ENCODE measurements at regions of chr11 and their contacts with region 1.

Region 1: GRCh38 chr11:62855571-62856332 is 16.4 kb upstream of the WDR74 start:
- DNase-seq: peak; percentile 96 to 99 (median 98)
- ATAC-seq: peak; percentile 92
- H3K4me3 ChIP-seq: peak overlapping the region; percentile 79
- H3K4me3 Mint-ChIP-seq: peak overlapping the region; percentile 98
- H3K27ac ChIP-seq: peak overlapping the region; percentile 66 to 72
- H3K27ac Mint-ChIP-seq: peak overlapping the region; percentile 90
- H3K4me1 ChIP-seq: peaks cover 41% of the 10 kb centered on the region
- H3K4me1 Mint-ChIP-seq: peaks cover 63% of the 10 kb centered on the region
- H3K27me3 ChIP-seq: no peaks in the 10 kb centered on the region
- H3K27me3 Mint-ChIP-seq: no peaks in the 10 kb centered on the region
- CTCF ChIP-seq: no peak

Region 2: DNA sequence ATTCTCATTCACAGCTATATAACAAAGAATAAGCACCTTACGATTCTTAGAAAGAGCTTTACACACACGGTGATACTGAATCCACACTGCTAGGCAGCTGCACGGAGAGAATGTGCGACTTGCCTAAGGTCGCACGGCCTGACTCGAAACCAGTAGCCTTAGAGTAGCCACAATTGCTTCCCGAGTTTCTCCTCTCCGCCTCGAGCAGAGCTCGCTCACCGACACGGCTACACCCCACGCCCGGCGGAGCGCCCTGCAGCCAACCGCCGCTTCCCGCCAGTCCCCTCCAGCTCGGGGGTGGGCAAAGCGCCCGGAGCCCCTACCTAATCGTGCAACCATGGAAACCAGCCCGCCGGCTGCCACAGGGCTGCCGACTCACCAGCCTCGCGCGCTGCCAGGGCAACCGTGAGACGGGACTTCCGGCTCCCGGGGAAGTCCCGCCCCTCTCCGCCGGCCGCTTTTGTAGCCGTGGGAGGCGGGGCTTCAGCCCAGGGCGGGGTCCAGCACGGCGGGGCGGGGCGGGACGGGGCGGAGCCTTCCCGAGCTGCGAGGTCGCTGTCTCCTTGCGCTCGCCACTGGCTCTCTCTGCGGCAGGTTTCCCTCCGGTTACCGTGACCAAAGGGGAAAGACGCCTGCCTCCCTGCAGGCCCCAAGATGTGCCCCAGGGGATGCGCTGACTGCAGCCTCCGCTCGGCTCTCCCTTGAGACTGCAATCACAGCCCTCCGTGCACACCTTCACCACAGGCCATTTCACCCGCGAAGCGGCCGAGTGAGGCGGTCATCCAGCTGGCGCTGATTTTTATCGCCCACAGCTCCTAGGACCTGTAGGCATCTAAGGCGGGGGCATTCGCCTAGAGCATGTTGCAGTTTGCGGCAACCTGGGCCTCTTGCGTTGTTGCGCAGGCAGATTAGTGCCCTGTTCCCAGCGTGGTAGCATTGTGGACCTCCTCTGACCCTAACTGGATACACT is 149.6 kb before region 1 on chr11:
- CTCF ChIA-PET with region 1: no interaction called
- POLR2A ChIA-PET with region 1: interaction called, 58 read pairs
- intact Hi-C with region 1: loop called in 1 of 2 experiments (anchors 5 kb)
- DNase-seq: peak; percentile 90 to 97 (median 94)
- ATAC-seq: peak; percentile 62
- H3K4me3 ChIP-seq: peak overlapping the region; percentile 79
- H3K4me3 Mint-ChIP-seq: peak overlapping the region; percentile 86
- H3K27ac ChIP-seq: peak overlapping the region; percentile 65 to 84
- H3K27ac Mint-ChIP-seq: peak overlapping the region; percentile 92
- H3K4me1 ChIP-seq: peaks cover 49% of the 10 kb centered on the region
- H3K4me1 Mint-ChIP-seq: peaks cover 42% of the 10 kb centered on the region
- H3K27me3 ChIP-seq: no peaks in the 10 kb centered on the region
- H3K27me3 Mint-ChIP-seq: no peaks in the 10 kb centered on the region
- CTCF ChIP-seq: no peak

Region 3: DNA sequence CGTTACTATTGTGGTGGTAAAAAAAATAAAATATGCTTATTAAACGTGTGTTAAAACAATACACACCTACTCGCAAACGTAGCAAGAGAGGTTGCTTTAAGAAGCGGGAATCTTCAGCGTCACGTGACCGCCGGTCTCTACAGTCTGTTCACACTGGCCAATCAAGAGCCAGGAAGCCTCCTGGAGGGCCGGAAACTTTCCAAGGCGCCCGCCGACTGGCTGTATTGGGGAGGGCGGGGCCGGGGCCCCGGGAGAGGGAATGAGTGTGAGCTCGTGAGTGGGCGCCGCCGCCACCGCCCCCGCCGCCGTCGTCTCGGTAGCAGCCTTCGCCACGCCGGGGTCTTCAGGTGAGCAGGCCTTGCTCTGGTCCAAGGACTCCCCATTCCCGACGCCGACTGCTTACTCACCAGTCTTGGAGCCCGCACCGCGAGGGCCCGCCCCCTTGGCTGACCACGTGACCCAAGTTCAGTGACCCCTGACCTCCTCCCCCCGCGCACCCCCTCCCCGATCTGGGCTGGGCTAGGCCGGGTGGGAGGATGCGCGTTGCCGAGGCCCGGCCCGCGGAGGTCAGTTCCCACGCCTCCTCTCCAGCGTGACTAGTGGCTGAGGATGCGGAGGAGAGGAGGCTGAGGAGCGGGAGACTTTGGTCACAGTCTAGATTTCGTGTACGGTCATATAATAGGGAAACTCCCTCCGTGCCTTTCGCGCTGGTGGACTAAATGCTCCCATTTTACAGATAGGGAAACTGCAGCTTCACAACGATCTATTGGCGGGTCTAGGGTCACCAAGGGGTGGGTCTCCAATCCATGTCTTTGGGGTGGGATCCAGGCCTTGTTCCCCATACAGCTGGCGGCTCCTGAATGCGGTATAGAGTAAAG is 84.4 kb before region 1 on chr11 and contains the start of gene TAF6L:
- CTCF ChIA-PET with region 1: no interaction called
- POLR2A ChIA-PET with region 1: interaction called, 18 read pairs
- intact Hi-C with region 1: no loop called
- DNase-seq: peak; percentile 81 to 95 (median 88)
- ATAC-seq: peak; percentile 76
- H3K4me3 ChIP-seq: peak within 1 kb of the TSS; percentile 76
- H3K4me3 Mint-ChIP-seq: peak within 1 kb of the TSS; percentile 97
- H3K27ac ChIP-seq: peak within 1 kb of the TSS; percentile 79 to 88
- H3K27ac Mint-ChIP-seq: peak within 1 kb of the TSS; percentile 97
- H3K4me1 ChIP-seq: peaks cover 27% of the 10 kb centered on the region
- H3K4me1 Mint-ChIP-seq: peaks cover 24% of the 10 kb centered on the region
- H3K27me3 ChIP-seq: no peaks in the 10 kb centered on the region
- H3K27me3 Mint-ChIP-seq: no peaks in the 10 kb centered on the region
- CTCF ChIP-seq: no peak
- total RNA-seq, gene TAF6L: 11.5 to 11.8 TPM

Region 4: GRCh38 chr11:62805076-62805892 is 50.5 kb before region 1 on chr11 and contains the start of gene NXF1:
- CTCF ChIA-PET with region 1: interaction called, 7 read pairs
- POLR2A ChIA-PET with region 1: interaction called, 31 read pairs
- intact Hi-C with region 1: no loop called
- DNase-seq: peak; percentile 88 to 98 (median 96)
- ATAC-seq: peak; percentile 82
- H3K4me3 ChIP-seq: peak within 1 kb of the TSS; percentile 70
- H3K4me3 Mint-ChIP-seq: peak within 1 kb of the TSS; percentile 98
- H3K27ac ChIP-seq: peak within 1 kb of the TSS; percentile 60 to 83
- H3K27ac Mint-ChIP-seq: peak within 1 kb of the TSS; percentile 97
- H3K4me1 ChIP-seq: peaks cover 36% of the 10 kb centered on the region
- H3K4me1 Mint-ChIP-seq: peaks cover 41% of the 10 kb centered on the region
- H3K27me3 ChIP-seq: no peaks in the 10 kb centered on the region
- H3K27me3 Mint-ChIP-seq: no peaks in the 10 kb centered on the region
- CTCF ChIP-seq: no peak
- total RNA-seq, gene NXF1: 343 to 358 TPM

Region 5: GRCh38 chr11:62831520-62832335 is 24.0 kb before region 1 on chr11 and contains the start of gene STX5:
- CTCF ChIA-PET with region 1: interaction called, 4 read pairs
- POLR2A ChIA-PET with region 1: interaction called, 82 read pairs
- intact Hi-C with region 1: no loop called
- DNase-seq: peak; percentile 99 to 100 (median 99)
- ATAC-seq: peak; percentile 95
- H3K4me3 ChIP-seq: peak within 1 kb of the TSS; percentile 86
- H3K4me3 Mint-ChIP-seq: peak within 1 kb of the TSS; percentile 92
- H3K27ac ChIP-seq: peak within 1 kb of the TSS; percentile 95 to 97
- H3K27ac Mint-ChIP-seq: peak within 1 kb of the TSS; percentile 95
- H3K4me1 ChIP-seq: peaks cover 44% of the 10 kb centered on the region
- H3K4me1 Mint-ChIP-seq: peaks cover 40% of the 10 kb centered on the region
- H3K27me3 ChIP-seq: no peaks in the 10 kb centered on the region
- H3K27me3 Mint-ChIP-seq: no peaks in the 10 kb centered on the region
- CTCF ChIP-seq: no peak
- total RNA-seq, gene STX5: 93.1 to 104 TPM

Region 6: DNA sequence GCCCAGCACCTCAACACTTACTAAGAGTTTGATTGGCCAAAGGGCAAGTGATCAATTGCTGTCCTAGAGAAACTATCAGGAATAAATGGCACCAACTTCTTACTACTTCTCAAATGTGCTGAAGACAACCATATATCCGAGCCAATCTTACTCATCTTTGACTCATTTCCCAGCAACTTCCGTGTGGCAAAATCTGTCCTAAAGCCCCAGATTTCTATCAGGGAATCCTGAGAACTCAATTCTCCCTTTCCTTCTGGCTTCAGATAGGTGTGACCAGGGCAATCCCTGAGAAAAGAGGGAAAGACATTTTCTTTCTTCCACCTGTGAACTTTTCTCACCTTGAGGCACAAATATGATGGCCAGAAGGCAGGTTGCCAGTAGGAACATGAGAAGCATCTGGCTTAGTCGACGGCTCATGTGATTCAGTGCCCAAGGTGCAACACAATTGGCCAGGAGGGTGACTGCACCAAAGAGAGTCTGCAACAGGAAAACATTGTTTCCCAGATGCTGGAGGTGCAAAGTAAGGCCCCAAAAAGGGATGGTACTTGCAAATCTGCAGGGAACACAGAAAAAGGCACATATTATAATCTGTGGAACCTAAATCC is 310.1 kb after region 1 on chr11:
- CTCF ChIA-PET with region 1: no interaction called
- POLR2A ChIA-PET with region 1: no interaction called
- intact Hi-C with region 1: no loop called
- DNase-seq: no peak
- ATAC-seq: no peak
- H3K4me3 ChIP-seq: no peak overlapping the region
- H3K4me3 Mint-ChIP-seq: no peak overlapping the region
- H3K27ac ChIP-seq: no peak overlapping the region
- H3K27ac Mint-ChIP-seq: no peak overlapping the region
- H3K4me1 ChIP-seq: no peaks in the 10 kb centered on the region
- H3K4me1 Mint-ChIP-seq: no peaks in the 10 kb centered on the region
- H3K27me3 ChIP-seq: peaks cover 16 to 37% of the 10 kb centered on the region in 2 experiments
- H3K27me3 Mint-ChIP-seq: peaks cover 65% of the 10 kb centered on the region
- CTCF ChIP-seq: no peak

Region 7: DNA sequence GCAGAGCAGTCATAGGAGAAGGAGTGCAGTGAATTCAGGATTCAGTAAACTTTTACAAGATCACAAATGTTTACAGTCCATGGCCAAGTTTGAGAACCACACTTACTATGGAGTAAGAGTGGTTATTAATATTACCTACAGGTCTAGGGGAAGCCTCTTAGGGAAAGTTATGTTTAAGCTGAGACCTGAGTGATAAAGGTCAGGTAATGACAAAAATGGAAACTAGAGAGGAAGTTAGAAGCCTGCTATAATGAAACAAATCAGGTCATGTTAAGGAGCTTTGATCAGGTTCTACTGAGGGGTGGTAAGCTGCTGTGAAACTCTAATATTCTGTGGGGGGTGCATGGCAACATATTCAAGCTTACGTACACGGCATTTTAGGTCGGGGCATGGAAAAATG is 481.3 kb after region 1 on chr11:
- CTCF ChIA-PET with region 1: no interaction called
- POLR2A ChIA-PET with region 1: no interaction called
- intact Hi-C with region 1: no loop called
- DNase-seq: no peak
- ATAC-seq: no peak
- H3K4me3 ChIP-seq: no peak overlapping the region
- H3K4me3 Mint-ChIP-seq: no peak overlapping the region
- H3K27ac ChIP-seq: no peak overlapping the region
- H3K27ac Mint-ChIP-seq: no peak overlapping the region
- H3K4me1 ChIP-seq: no peaks in the 10 kb centered on the region
- H3K4me1 Mint-ChIP-seq: no peaks in the 10 kb centered on the region
- H3K27me3 ChIP-seq: peaks cover 2 to 9% of the 10 kb centered on the region in 2 experiments
- H3K27me3 Mint-ChIP-seq: peaks cover 50% of the 10 kb centered on the region
- CTCF ChIP-seq: no peak

Measured in CD4-positive, alpha-beta T cell (primary cell).